ENCODE measurements at regions of chr9 and their contacts with region 1.

Region 1: GRCh38 chr9:112333639-112334431 is 416 bp upstream of the PTBP3 start:
- DNase-seq: peak; percentile 98
- H3K4me3 ChIP-seq: peak overlapping the region; percentile 86
- H3K27ac ChIP-seq: peak overlapping the region; percentile 91
- H3K4me1 ChIP-seq: peaks cover 23% of the 10 kb centered on the region
- CTCF ChIP-seq: peak; percentile 52

Region 2: DNA sequence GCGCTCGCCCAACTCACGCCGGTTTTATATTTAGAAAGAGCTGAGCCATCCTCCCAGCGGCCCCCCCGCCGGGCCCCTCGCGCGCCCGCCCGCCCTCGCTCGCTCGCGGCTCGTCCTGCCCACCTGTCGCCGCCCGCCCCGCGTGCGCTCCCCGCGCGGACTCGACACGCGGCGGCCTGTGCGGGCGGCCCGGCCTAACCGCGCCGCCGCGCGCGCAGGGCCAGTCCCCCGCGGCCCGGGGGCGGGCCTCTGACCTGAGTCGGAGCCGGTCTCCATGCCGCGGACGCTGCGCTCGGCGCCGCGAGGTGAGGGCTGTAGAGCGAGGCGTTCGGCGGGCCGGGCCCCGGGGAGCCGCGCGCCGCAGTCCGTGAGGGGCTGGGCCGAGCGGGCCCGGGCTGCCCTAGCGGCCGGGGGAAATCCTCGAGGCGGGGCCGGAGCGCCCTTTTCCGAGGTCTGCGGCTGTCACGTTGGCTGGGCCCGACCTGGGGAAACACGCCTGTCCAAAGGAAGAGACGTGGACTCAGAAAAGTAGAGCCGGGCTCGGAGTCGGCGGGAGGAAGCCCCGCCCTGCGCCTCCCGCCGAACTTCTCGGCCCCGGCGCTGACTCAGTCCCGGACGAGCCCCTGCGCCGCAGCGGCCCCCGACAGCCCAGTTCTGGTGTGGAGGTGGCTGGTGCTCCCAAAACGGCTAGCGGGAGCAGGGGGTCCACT is 849.8 kb before region 1 on chr9 and contains the start of gene ECPAS:
- CTCF ChIA-PET with region 1: no interaction called
- POLR2A ChIA-PET with region 1: no interaction called
- intact Hi-C with region 1: loop called (anchors 5 kb)
- DNase-seq: peak; percentile 79
- H3K4me3 ChIP-seq: peak within 1 kb of the TSS; percentile 99
- H3K27ac ChIP-seq: peak within 1 kb of the TSS; percentile 72
- H3K4me1 ChIP-seq: peaks cover 9% of the 10 kb centered on the region
- CTCF ChIP-seq: no peak
- total RNA-seq, gene ECPAS: 41.0 and 47.3 TPM in 2 replicates

Region 3: DNA sequence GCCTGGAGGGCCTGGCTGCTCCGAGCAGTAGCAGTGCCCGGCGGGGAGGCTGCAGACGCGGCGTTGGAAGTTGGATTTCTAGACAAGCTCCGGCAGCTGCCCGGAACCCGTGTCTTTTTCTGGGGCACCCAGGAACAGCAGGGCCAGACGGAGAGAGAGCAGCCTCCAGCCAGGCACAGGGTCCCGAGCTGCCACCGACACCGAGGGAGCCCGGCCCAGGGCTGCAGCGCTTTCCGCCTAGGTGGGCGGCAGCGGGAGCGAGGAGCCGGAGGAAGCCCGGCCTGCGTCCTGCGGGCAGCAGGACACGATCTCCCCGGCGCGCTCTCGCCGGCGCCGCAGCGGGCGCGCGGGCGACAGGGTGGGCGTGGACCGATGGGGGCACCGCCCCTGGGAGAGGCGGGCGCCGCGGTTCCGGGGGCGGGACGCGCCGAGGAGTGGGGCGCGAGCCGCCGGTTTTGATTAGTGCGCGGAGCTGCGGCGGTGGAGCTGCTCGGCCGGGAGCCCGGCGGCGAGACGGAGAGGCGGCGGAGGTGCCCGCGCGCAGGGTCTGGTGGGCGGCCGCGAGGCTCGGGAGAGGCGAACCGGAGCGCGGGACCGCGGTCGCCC is 437.4 kb before region 1 on chr9 and contains the start of gene UGCG:
- CTCF ChIA-PET with region 1: no interaction called
- POLR2A ChIA-PET with region 1: no interaction called
- intact Hi-C with region 1: loop called (anchors 2 kb)
- DNase-seq: peak; percentile 91
- H3K4me3 ChIP-seq: peak within 1 kb of the TSS; percentile 97
- H3K27ac ChIP-seq: peak within 1 kb of the TSS; percentile 82
- H3K4me1 ChIP-seq: peaks cover 42% of the 10 kb centered on the region
- CTCF ChIP-seq: no peak
- total RNA-seq, gene UGCG: 12.0 and 14.7 TPM in 2 replicates

Region 4: GRCh38 chr9:112233768-112234167 is 100.1 kb before region 1 on chr9:
- CTCF ChIA-PET with region 1: interaction called, 3 read pairs
- POLR2A ChIA-PET with region 1: interaction called, 10 read pairs
- intact Hi-C with region 1: no loop called
- DNase-seq: no peak
- H3K4me3 ChIP-seq: no peak overlapping the region
- H3K27ac ChIP-seq: no peak overlapping the region
- H3K4me1 ChIP-seq: no peaks in the 10 kb centered on the region
- CTCF ChIP-seq: no peak

Region 5: DNA sequence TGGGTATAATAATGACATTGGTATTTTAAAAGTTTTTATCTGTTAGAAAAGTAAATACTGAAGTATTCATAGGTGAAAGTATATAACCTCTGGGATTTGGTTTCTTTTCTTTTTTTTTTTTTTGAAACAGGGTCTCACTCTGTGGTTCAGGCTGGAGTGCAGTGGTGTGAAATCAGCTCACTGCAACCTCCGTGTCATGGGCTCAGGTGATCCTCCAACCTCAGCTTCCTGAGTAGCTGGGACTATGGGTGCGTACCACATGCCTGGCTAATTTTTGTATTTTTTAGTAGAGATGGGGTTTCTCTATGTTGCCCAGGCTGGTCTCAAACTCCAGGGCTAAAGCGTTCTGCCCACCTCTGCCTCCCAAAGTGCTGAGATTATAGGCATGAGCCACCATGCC is 53.3 kb after region 1 on chr9:
- CTCF ChIA-PET with region 1: no interaction called
- POLR2A ChIA-PET with region 1: no interaction called
- intact Hi-C with region 1: no loop called
- DNase-seq: no peak
- H3K4me3 ChIP-seq: no peak overlapping the region
- H3K27ac ChIP-seq: no peak overlapping the region
- H3K4me1 ChIP-seq: peaks cover 23% of the 10 kb centered on the region
- CTCF ChIP-seq: no peak

Region 6: GRCh38 chr9:112443200-112443599 is 109.4 kb after region 1 on chr9:
- CTCF ChIA-PET with region 1: no interaction called
- POLR2A ChIA-PET with region 1: no interaction called
- intact Hi-C with region 1: no loop called
- DNase-seq: peak; percentile 39
- H3K4me3 ChIP-seq: no peak overlapping the region
- H3K27ac ChIP-seq: no peak overlapping the region
- H3K4me1 ChIP-seq: peaks cover 12% of the 10 kb centered on the region
- CTCF ChIP-seq: peak; percentile 79

Region 7: DNA sequence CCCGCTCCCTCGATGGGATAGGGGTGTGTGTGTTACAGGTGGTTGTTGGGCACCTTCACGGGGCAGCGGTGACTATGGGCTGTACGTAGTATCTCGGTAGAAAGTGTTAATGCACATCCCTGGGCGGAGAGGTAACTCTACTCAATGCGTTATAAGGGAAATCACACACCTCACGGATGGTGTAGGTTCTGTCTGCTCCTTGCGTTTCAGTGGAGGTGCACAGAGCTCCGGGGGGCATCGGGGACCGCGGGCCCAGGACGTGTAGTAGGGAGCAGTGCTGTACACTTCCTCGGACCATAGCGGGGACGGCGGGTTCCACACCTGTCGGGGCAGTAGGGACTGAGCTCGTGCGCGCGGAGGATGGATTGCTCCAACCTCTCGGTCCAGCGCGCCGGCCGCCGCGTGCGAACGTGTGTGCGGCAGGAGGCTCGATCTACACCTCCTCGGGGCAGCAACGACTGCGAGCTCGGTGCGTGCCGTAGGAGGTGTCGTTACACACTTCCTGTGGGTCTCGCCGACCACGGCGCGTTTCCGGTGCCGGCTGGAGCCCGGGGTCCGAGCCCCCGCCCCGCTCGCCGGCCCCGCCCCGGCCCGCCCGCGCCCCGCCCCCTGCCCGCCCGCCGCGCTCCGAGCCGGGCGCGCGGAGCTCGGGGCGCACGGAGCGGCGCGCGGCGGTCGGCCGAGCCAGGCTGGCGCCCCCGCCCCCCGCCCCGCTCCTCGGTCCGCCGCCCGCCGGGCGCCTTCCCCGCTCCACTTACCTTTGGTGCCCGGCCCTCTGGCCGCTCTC is 152.6 kb after region 1 on chr9 and contains the start of gene KIAA1958:
- CTCF ChIA-PET with region 1: no interaction called
- POLR2A ChIA-PET with region 1: no interaction called
- intact Hi-C with region 1: loop called (anchors 1 kb)
- DNase-seq: peak; percentile 93
- H3K4me3 ChIP-seq: peak within 1 kb of the TSS; percentile 84
- H3K27ac ChIP-seq: peak within 1 kb of the TSS; percentile 66
- H3K4me1 ChIP-seq: peaks cover 27% of the 10 kb centered on the region
- CTCF ChIP-seq: no peak
- total RNA-seq, gene KIAA1958: 13.4 and 15.4 TPM in 2 replicates

Region 8: GRCh38 chr9:112764344-112764743 is 430.5 kb after region 1 on chr9:
- CTCF ChIA-PET with region 1: no interaction called
- POLR2A ChIA-PET with region 1: no interaction called
- intact Hi-C with region 1: no loop called
- DNase-seq: no peak
- H3K4me3 ChIP-seq: no peak overlapping the region
- H3K27ac ChIP-seq: no peak overlapping the region
- H3K4me1 ChIP-seq: no peaks in the 10 kb centered on the region
- CTCF ChIP-seq: no peak

Measured in OCI-LY7 (cell line).